ENCODE measurements at regions of chr6 and their contacts with region 1.

Region 1: GRCh38 chr6:291697-292505 is at the start of gene DUSP22:
- DNase-seq: peak; percentile 50 to 95 (median 81)
- ATAC-seq: peak; percentile 55
- H3K4me3 ChIP-seq: peak within 1 kb of the TSS; percentile 64 to 65
- H3K4me3 Mint-ChIP-seq: peak within 1 kb of the TSS; percentile 95
- H3K27ac ChIP-seq: peak within 1 kb of the TSS; percentile 55 to 85
- H3K27ac Mint-ChIP-seq: peak within 1 kb of the TSS; percentile 98
- H3K4me1 ChIP-seq: peaks cover 26% of the 10 kb centered on the region
- H3K4me1 Mint-ChIP-seq: peaks cover 51% of the 10 kb centered on the region
- H3K27me3 ChIP-seq: no peaks in the 10 kb centered on the region
- H3K27me3 Mint-ChIP-seq: no peaks in the 10 kb centered on the region
- CTCF ChIP-seq: no peak
- total RNA-seq, gene DUSP22: 19.9 to 22.1 TPM

Region 2: GRCh38 chr6:215335-216034 is 76.4 kb before region 1 on chr6:
- CTCF ChIA-PET with region 1: no interaction called
- POLR2A ChIA-PET with region 1: no interaction called
- intact Hi-C with region 1: loop called in 1 of 2 experiments (anchors 1 kb)
- DNase-seq: peak in 8 of 9 experiments; percentile 32 to 84 (median 60)
- ATAC-seq: peak; percentile 93
- H3K4me3 ChIP-seq: no peak overlapping the region
- H3K4me3 Mint-ChIP-seq: no peak overlapping the region
- H3K27ac ChIP-seq: peak overlapping the region in 1 of 2 experiments; percentile 32
- H3K27ac Mint-ChIP-seq: peak overlapping the region; percentile 57
- H3K4me1 ChIP-seq: peaks cover 3% of the 10 kb centered on the region
- H3K4me1 Mint-ChIP-seq: peaks cover 15% of the 10 kb centered on the region
- H3K27me3 ChIP-seq: no peaks in the 10 kb centered on the region
- H3K27me3 Mint-ChIP-seq: no peaks in the 10 kb centered on the region
- CTCF ChIP-seq: no peak

Region 3: DNA sequence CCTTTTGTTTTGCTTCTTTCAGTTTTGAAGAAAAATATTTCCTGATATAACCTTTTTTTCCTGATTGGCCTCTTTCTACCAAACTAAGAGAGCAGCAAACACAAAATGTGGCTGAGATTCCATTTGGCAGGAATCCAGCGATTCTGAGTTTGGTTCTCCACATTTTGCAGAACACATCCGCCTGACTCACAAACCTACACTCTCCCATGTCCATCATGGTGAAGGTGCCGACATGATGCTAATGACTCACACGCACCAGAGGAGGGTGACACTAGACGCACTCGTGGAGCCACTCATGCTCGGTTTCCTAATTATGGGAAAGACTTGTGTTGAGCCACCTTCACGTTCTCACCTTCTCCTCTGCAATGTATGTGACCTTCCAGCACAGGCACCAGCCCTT is 45.5 kb before region 1 on chr6:
- CTCF ChIA-PET with region 1: no interaction called
- POLR2A ChIA-PET with region 1: no interaction called
- intact Hi-C with region 1: no loop called
- DNase-seq: no peak
- ATAC-seq: no peak
- H3K4me3 ChIP-seq: no peak overlapping the region
- H3K4me3 Mint-ChIP-seq: no peak overlapping the region
- H3K27ac ChIP-seq: no peak overlapping the region
- H3K27ac Mint-ChIP-seq: no peak overlapping the region
- H3K4me1 ChIP-seq: no peaks in the 10 kb centered on the region
- H3K4me1 Mint-ChIP-seq: peaks cover 6% of the 10 kb centered on the region
- H3K27me3 ChIP-seq: no peaks in the 10 kb centered on the region
- H3K27me3 Mint-ChIP-seq: no peaks in the 10 kb centered on the region
- CTCF ChIP-seq: no peak

Region 4: DNA sequence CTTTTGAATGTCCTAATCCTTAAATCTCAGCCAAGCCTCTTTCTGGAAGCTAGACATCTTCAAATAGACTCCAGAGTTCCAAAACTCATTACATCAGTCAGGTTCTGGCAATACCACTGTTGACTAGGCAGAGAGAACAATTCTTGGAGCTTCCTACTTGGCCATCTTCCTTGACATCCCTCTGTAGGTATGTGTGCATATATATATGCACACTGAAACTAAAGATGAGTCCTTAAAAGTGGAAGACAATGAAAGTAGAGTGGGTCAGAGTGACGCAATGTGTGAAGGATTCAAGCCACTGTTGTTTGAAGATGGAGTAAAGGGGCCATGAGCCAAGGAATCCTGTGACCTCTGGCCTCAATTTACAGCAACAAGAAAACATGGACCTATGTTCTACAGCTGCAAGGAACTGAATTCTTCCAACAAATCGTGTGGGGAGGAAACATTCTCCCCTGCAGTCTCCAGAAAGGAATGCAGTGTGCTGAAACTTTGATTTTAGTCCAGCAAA is 18.3 kb before region 1 on chr6:
- CTCF ChIA-PET with region 1: interaction called, 3 read pairs
- POLR2A ChIA-PET with region 1: no interaction called
- intact Hi-C with region 1: loop called in 1 of 2 experiments (anchors 1 kb)
- DNase-seq: no peak
- ATAC-seq: no peak
- H3K4me3 ChIP-seq: no peak overlapping the region
- H3K4me3 Mint-ChIP-seq: no peak overlapping the region
- H3K27ac ChIP-seq: no peak overlapping the region
- H3K27ac Mint-ChIP-seq: no peak overlapping the region
- H3K4me1 ChIP-seq: peaks cover 10% of the 10 kb centered on the region
- H3K4me1 Mint-ChIP-seq: peaks cover 27% of the 10 kb centered on the region
- H3K27me3 ChIP-seq: no peaks in the 10 kb centered on the region
- H3K27me3 Mint-ChIP-seq: no peaks in the 10 kb centered on the region
- CTCF ChIP-seq: no peak

Region 5: DNA sequence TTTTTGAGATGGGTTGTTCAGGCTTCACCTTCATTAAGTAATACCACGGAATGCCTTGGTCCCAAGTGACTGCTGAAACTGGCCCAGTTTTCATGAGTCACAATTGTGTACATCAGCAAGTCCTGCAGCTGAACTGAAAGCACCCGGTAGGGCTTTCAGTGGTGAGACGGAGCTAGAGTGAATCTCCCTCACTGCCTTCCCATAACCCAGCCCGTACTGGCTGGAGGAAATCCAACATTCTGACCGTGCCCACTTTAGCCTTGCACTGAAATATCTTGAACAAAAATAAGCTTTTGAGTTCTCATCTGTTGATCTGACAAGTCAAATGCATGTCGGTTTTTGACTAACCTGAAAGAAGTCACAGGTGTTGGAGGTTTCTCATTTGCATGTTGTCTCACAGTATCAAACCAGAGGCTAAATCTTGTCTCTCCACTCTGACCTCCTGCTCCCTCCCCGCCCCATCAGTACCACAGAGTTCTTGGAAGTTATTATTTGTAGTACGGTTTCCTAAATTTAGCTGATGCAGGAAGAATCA is 36.3 kb after region 1 on chr6:
- CTCF ChIA-PET with region 1: no interaction called
- POLR2A ChIA-PET with region 1: no interaction called
- intact Hi-C with region 1: no loop called
- DNase-seq: no peak
- ATAC-seq: no peak
- H3K4me3 ChIP-seq: no peak overlapping the region
- H3K4me3 Mint-ChIP-seq: no peak overlapping the region
- H3K27ac ChIP-seq: no peak overlapping the region
- H3K27ac Mint-ChIP-seq: no peak overlapping the region
- H3K4me1 ChIP-seq: no peaks in the 10 kb centered on the region
- H3K4me1 Mint-ChIP-seq: peaks cover 2% of the 10 kb centered on the region
- H3K27me3 ChIP-seq: no peaks in the 10 kb centered on the region
- H3K27me3 Mint-ChIP-seq: no peaks in the 10 kb centered on the region
- CTCF ChIP-seq: no peak

Region 6: DNA sequence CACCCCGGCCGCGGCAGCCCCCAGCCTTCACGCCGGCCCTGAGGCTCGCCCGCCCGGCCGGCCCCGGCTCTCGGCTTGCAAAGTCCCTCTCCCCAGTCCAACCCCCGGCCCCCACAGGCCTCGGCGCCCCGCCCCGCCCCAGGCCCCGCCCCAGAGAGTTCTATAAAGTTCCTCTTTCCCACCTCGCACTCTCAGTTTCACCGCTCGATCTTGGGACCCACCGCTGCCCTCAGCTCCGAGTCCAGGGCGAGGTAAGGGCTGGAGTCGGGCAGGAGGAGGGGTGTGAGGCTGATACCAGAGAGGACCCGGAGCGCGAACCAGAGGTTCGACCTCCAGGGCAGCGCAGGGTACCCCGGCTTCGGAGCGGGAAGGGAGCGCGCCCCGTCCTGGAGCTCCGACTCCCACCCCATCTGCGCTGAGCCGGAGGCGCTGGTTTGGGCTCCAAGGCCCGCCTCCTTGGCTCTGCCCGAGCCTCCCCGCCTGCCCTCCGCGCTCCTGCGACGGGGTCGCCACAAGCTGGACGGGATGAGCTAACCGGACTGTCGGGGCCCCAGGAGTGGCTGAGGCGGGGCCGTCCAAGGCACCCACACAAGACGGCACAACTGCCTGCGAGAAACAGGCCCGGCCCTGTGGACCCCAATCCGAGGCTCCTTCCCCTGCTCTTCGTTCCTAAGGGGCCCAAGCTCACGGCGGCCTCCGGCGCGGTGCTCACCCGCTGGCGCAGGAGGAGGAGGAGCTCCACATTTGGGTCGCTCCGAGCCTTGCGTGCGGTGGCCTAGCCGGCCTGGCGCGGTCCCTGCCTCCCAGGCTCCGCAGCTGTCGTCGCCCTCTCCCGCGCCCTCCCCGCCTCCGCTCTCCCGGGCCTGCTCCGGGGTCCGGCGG is 99.9 kb after region 1 on chr6 and contains the start of gene IRF4:
- CTCF ChIA-PET with region 1: interaction called, 4 read pairs
- POLR2A ChIA-PET with region 1: interaction called, 3 read pairs
- intact Hi-C with region 1: loop called in 1 of 2 experiments (anchors 5 kb)
- DNase-seq: peak in 6 of 9 experiments; percentile 32 to 59 (median 36)
- ATAC-seq: peak; percentile 39
- H3K4me3 ChIP-seq: peak within 1 kb of the TSS; percentile 77 to 78
- H3K4me3 Mint-ChIP-seq: peak within 1 kb of the TSS; percentile 93
- H3K27ac ChIP-seq: no peak within 1 kb of the TSS
- H3K27ac Mint-ChIP-seq: peak within 1 kb of the TSS; percentile 85
- H3K4me1 ChIP-seq: peaks cover 17% of the 10 kb centered on the region
- H3K4me1 Mint-ChIP-seq: peaks cover 28% of the 10 kb centered on the region
- H3K27me3 ChIP-seq: peaks cover 0 to 10% of the 10 kb centered on the region in 2 experiments
- H3K27me3 Mint-ChIP-seq: peaks cover 7% of the 10 kb centered on the region
- CTCF ChIP-seq: no peak
- total RNA-seq, gene IRF4: 24.7 to 25.6 TPM

Region 7: GRCh38 chr6:498795-499231 is 206.9 kb after region 1 on chr6:
- CTCF ChIA-PET with region 1: no interaction called
- POLR2A ChIA-PET with region 1: no interaction called
- intact Hi-C with region 1: loop called in 1 of 2 experiments (anchors 10 kb)
- DNase-seq: peak in 6 of 9 experiments; percentile 12 to 70 (median 28)
- ATAC-seq: peak; percentile 55
- H3K4me3 ChIP-seq: no peak overlapping the region
- H3K4me3 Mint-ChIP-seq: peak overlapping the region; percentile 49
- H3K27ac ChIP-seq: peak overlapping the region in 1 of 2 experiments; percentile 73
- H3K27ac Mint-ChIP-seq: peak overlapping the region; percentile 83
- H3K4me1 ChIP-seq: peaks cover 41% of the 10 kb centered on the region
- H3K4me1 Mint-ChIP-seq: peaks cover 58% of the 10 kb centered on the region
- H3K27me3 ChIP-seq: no peaks in the 10 kb centered on the region
- H3K27me3 Mint-ChIP-seq: no peaks in the 10 kb centered on the region
- CTCF ChIP-seq: no peak

Measured in CD8-positive, alpha-beta T cell (primary cell).